Activated T-helper 2 cell treated with anti-CD3 and anti-CD28 coated beads, Interferon-gamma antibody, Interleukin-2, Interleukin-4, amounts not matched to agents 10 μg/mL and 5 μg/mL and 100 μg/mL, durations not matched to agents 14 hours and 24 hours and 36 hours (primary cell): ENCODE measurements at regions of chr4 and their contacts with region 1.

Region 1: GRCh38 chr4:931960-932712 is at the starts of genes GAK and TMEM175:
- DNase-seq: peak; percentile 97
- H3K4me3 Mint-ChIP-seq: peak within 1 kb of the TSS; percentile 96
- H3K27ac Mint-ChIP-seq: peak within 1 kb of the TSS; percentile 77
- H3K4me1 Mint-ChIP-seq: peaks cover 34% of the 10 kb centered on the region
- H3K27me3 Mint-ChIP-seq: no peaks in the 10 kb centered on the region
- total RNA-seq, gene GAK: 123 and 125 TPM in 2 replicates
- total RNA-seq, gene TMEM175: 11.8 and 12.9 TPM in 2 replicates

Region 2: GRCh38 chr4:705278-706082 is 226.7 kb before region 1 on chr4 and contains the start of gene PCGF3:
- intact Hi-C with region 1: loop called (anchors 1 kb)
- DNase-seq: peak; percentile 94
- H3K4me3 Mint-ChIP-seq: peak within 1 kb of the TSS; percentile 74
- H3K27ac Mint-ChIP-seq: peak within 1 kb of the TSS; percentile 52
- H3K4me1 Mint-ChIP-seq: peaks cover 16% of the 10 kb centered on the region
- H3K27me3 Mint-ChIP-seq: no peaks in the 10 kb centered on the region
- total RNA-seq, gene PCGF3: 35.0 and 39.2 TPM in 2 replicates

Region 3: GRCh38 chr4:879729-880077 is 52.4 kb before region 1 on chr4:
- intact Hi-C with region 1: loop called (anchors 2 kb)
- DNase-seq: peak; percentile 50
- H3K4me3 Mint-ChIP-seq: peak overlapping the region; percentile 81
- H3K27ac Mint-ChIP-seq: peak overlapping the region; percentile 98
- H3K4me1 Mint-ChIP-seq: peaks cover 29% of the 10 kb centered on the region
- H3K27me3 Mint-ChIP-seq: no peaks in the 10 kb centered on the region

Region 4: DNA sequence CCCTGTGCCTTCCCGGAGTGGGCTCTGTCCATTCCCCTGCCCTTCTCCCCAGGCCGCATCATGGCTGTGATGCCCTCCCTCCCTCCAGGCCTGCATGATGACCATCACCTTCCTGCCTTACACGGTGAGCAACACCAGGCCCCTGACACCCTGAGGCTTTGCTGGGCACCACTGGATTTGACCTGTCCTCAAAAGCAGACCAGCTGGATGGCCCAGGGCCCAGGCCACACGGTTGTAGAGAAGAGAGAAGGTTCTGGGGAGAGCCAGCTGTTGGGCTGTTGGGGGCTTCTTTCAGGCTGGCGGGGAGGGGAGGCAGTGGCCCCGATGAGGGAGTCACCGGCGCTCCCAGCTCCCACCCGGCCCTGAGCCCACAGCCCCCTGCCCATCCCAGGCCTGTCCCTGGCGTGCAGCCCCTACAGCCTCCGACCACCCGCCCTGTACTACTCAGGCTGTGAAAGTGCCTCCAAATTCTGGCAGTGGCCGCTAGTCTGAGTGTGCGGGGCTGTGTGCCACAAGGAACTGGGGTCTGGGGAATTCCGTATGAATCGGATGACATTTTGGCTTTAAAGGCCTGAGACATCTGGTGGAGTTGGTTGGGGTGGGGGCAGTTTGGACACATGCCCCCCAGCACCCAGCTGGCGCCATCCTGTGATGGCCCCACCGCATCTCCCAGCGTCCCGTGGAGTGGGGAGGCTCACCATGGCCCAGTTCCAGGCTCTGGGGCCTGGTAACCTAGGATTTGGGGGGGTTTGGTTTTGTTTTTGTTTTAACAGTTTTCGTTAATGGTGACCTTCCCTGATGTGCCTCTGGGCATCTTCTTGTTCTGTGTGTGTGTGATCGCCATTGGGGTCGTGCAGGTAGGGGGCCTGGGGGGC is 19.7 kb after region 1 on chr4:
- intact Hi-C with region 1: no loop called
- DNase-seq: no peak
- H3K4me3 Mint-ChIP-seq: no peak overlapping the region
- H3K27ac Mint-ChIP-seq: no peak overlapping the region
- H3K4me1 Mint-ChIP-seq: no peaks in the 10 kb centered on the region
- H3K27me3 Mint-ChIP-seq: no peaks in the 10 kb centered on the region

Region 5: DNA sequence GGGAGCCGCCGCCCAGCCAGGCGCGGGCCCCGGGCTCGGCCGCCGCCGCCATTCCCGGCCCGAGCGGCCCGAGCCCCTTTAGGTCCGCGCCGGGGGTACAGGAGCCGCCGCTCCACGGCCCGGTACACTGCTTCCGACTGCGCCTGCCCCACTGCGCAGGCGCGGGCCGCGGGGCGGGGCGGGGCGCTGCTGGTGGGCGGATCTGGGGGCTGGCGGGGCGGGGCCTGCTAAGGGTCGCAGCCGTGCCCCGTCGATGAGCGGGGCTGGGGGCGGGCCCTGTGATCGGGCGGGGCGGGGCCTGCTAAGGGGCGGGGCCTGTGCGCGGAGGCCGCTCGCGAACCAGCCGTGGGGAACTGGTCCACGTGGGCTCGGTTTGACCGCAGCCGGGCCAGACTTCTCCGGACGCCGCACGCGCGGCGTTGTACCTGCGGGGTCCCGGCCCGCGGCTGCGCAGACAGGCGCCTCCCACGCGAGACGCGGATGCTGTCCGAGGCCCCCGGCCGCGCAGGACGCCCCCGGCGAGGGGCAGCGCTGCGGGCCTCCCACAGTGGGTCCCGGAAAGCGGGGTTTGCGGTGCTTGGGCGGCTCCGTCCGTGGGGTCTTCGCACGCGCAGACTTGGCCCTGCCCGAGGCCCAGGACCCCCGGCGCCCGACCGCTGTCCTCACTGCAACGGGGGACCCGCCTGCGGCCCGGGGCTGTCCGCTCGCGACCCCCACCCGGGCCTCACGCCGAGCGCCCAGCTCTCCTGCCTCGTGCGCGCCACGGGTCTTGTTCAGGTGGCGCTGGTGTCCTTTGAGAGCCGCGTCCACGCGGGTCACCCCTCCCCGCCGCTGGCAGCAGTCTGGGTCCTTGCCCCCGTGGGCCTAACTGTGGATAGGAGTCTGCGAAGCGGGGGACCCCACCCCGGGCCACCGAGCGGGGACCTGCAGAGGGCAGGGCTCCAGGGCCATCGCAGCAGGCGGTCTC is 41.6 kb after region 1 on chr4 and contains the start of gene DGKQ:
- intact Hi-C with region 1: loop called (anchors 2 kb)
- DNase-seq: peak; percentile 79
- H3K4me3 Mint-ChIP-seq: peak within 1 kb of the TSS; percentile 52
- H3K27ac Mint-ChIP-seq: no peak within 1 kb of the TSS
- H3K4me1 Mint-ChIP-seq: no peaks in the 10 kb centered on the region
- H3K27me3 Mint-ChIP-seq: no peaks in the 10 kb centered on the region
- total RNA-seq, gene DGKQ: 13.0 and 14.4 TPM in 2 replicates

Region 6: DNA sequence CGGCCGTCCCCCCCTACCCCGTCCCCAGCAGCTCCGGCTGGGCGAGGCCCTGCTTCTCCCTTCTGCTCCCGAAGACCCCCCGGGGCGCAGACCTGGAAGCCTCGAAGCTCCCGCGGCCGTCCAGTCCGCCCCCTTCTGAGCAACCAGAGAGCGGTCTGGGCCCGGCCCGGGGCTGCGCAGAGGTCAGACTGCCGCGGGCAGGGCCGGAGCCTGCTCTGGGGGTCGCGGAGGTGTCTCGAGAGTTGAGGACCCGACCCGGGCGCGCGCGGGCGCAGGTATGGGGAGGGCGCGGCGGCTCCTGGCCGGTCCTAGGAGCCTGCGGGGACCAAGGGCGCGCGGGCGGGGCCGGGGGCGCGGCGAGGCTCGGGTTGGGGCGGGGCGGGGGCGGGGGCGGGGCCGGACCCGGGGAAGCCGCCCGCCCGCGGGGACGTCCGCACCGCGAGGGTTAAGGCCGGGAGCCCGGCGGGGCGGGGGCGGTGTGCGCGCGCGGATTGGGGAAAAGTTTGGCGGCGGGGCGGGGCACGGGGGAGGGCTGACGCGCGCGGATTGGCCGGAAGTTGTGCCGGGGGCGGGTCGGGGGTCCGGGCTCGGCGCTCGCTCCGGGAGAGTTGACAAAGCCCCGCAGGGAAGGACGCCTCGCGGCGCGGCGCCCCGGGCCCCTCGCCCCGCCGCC is 79.0 kb after region 1 on chr4 and contains the start of gene FGFRL1:
- intact Hi-C with region 1: loop called (anchors 1 kb)
- DNase-seq: peak; percentile 89
- H3K4me3 Mint-ChIP-seq: peak within 1 kb of the TSS; percentile 82
- H3K27ac Mint-ChIP-seq: peak within 1 kb of the TSS; percentile 89
- H3K4me1 Mint-ChIP-seq: peaks cover 9% of the 10 kb centered on the region
- H3K27me3 Mint-ChIP-seq: peaks cover 25% of the 10 kb centered on the region
- total RNA-seq, gene FGFRL1: 17.5 TPM in 2 replicates